PC-9 (cell line): ENCODE measurements at regions of chr19 and their contacts with region 1.

Region 1: DNA sequence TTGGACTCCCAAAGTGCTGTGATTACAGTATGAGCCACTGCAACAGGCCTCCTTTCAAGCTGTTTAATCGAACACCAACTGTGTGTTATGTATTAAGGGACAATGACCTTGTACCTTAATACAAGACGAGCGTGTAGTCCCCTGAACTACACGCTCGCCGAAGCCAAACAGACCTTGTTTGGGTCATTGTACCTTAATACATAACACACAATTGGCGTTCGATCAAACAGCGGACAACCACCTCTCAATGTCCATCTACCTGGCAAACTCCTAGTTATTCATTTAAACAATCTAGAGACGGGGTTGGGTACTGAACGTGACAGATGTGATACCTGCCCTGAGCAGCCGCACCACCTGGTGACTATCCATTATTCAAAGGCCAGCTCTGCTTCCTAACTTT is 1.3 kb downstream of the CHERP start:
- DNase-seq: no peak
- H3K4me3 ChIP-seq: peak overlapping the region; percentile 95
- H3K27ac ChIP-seq: no peak overlapping the region; the same call in 1 of the 2 replicates
- H3K4me1 ChIP-seq: peaks cover 17% of the 10 kb centered on the region
- H3K27me3 ChIP-seq: no peaks in the 10 kb centered on the region
- CTCF ChIP-seq: no peak

Region 2: GRCh38 chr19:16366433-16367260 is 174.3 kb before region 1 on chr19:
- CTCF ChIA-PET with region 1: no interaction called
- POLR2A ChIA-PET with region 1: no interaction called
- intact Hi-C with region 1: no loop called
- DNase-seq: no peak
- H3K4me3 ChIP-seq: no peak overlapping the region
- H3K27ac ChIP-seq: no peak overlapping the region
- H3K4me1 ChIP-seq: no peaks in the 10 kb centered on the region
- H3K27me3 ChIP-seq: no peaks in the 10 kb centered on the region
- CTCF ChIP-seq: no peak

Region 3: DNA sequence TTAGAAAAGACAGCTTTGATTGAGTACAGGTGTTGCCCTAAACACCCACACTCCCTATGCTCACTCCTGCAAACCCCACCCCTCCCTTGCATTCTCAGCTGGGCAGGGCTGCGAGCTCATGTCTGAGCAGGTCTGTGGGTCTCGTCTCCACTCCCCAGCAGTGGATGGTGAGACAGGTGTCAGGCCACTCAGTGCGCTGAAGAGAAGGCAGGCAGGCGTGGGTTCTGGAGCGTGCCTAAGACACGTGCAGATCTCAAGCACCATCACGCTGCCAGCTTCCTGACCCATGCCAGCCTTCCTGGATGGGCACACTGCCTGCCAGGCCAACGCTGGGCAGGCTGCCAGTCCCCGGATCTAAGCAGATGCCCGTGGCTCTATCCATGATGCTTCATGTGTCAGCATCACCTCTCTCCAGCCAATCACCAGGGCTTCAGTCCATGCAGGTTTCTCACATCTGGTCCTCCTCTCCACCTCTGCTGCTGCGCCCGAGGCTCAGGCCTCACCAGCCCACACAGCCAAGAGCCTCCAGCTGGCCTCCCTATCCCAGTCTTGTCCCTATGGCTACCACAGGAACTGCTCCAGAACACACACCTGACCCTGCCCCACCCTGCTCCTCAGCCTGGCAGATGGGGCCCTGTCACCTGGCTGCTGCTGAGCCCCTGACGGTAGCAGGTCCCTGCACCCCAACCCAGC is 111.7 kb before region 1 on chr19:
- CTCF ChIA-PET with region 1: no interaction called
- POLR2A ChIA-PET with region 1: no interaction called
- intact Hi-C with region 1: no loop called
- DNase-seq: no peak
- H3K4me3 ChIP-seq: no peak overlapping the region
- H3K27ac ChIP-seq: no peak overlapping the region
- H3K4me1 ChIP-seq: no peaks in the 10 kb centered on the region
- H3K27me3 ChIP-seq: no peaks in the 10 kb centered on the region
- CTCF ChIP-seq: no peak

Region 4: GRCh38 chr19:16442386-16443276 is 98.3 kb before region 1 on chr19:
- CTCF ChIA-PET with region 1: no interaction called
- POLR2A ChIA-PET with region 1: interaction called, 10 read pairs
- intact Hi-C with region 1: no loop called
- DNase-seq: no peak
- H3K4me3 ChIP-seq: no peak overlapping the region
- H3K27ac ChIP-seq: no peak overlapping the region
- H3K4me1 ChIP-seq: peaks cover 18% of the 10 kb centered on the region
- H3K27me3 ChIP-seq: no peaks in the 10 kb centered on the region
- CTCF ChIP-seq: no peak